Activated CD4-positive, alpha-beta memory T cell treated with anti-CD3 and anti-CD28 coated beads, Interleukin-2, amount 10 ng/mL, durations not matched to agents 7 days and 5 days (primary cell): ENCODE measurements at regions of chr3 and their contacts with region 1.

Region 1: DNA sequence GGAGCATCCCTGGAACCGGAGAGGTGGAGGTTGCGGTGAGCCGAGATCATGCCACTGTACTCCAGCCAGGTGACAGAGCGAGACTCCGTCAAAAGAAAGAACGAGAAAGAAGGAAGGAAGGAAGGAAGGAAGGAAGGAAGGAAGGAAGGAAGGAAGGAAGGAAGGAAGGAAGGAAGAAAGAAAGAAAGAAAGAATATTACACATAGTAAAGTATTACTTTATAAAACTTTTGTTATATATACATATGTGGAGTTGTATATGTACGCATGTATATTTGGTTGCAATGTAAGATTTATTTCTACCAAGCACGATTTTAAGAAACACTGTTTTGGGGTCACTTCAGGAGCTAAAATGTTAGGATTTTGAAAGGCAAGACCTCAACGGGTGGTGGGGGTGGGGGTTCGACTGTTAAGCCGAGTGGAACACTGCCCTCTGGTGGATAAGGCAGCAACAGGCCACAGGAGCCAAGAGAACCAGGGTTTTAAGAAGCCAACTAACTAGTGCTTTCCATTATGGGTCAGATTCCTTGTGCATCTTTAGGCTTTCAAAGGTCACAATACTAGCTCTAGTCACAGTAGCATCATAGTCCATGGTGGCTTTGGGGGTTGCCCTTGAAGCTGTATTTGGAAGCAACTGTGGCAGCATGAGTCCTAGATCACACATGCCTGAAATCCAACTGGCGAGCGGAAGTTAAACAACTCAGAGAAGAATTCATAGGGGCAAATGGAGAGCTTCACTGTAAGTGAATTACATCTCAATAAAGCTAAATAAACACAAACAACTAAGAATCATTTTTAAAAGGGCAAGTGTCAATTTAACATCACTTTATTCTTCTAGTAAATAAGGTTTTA is 22.5 kb downstream of the GLB1 start:
- DNase-seq: peak; percentile 75
- H3K4me3 Mint-ChIP-seq: no peak overlapping the region
- H3K27ac Mint-ChIP-seq: no peak overlapping the region
- H3K4me1 Mint-ChIP-seq: peaks cover 51% of the 10 kb centered on the region
- H3K27me3 Mint-ChIP-seq: peaks cover 2% of the 10 kb centered on the region

Region 2: DNA sequence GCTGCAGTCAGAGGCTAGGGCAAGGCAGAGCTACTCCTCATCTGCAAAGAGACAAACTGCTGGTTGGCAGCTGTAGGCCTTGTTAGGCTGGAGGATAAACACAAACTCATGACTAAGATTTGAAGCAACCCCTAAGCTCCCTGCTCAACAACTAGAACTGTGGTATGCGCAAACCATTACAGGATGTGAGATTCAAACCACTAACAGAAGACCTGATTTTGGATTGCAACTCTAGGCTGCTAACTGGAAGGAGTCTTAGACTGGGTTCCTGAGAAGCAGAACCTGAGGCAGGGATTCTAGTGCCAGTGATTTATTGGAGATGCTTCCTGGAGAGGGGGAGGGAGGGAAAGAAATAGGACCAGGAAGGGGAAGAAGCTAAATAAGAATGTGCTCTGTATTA is 100.5 kb before region 1 on chr3:
- CTCF ChIA-PET with region 1: interaction called, 14 read pairs
- POLR2A ChIA-PET with region 1: interaction called, 4 read pairs
- DNase-seq: peak; percentile 64
- H3K4me3 Mint-ChIP-seq: peak overlapping the region; percentile 6
- H3K27ac Mint-ChIP-seq: peak overlapping the region; percentile 90
- H3K4me1 Mint-ChIP-seq: peaks cover 60% of the 10 kb centered on the region
- H3K27me3 Mint-ChIP-seq: no peaks in the 10 kb centered on the region

Region 3: GRCh38 chr3:33030802-33031201 is 43.6 kb before region 1 on chr3:
- CTCF ChIA-PET with region 1: interaction called, 105 read pairs
- POLR2A ChIA-PET with region 1: interaction called, 10 read pairs
- DNase-seq: peak; percentile 72
- H3K4me3 Mint-ChIP-seq: no peak overlapping the region
- H3K27ac Mint-ChIP-seq: peak overlapping the region; percentile 41
- H3K4me1 Mint-ChIP-seq: peaks cover 31% of the 10 kb centered on the region
- H3K27me3 Mint-ChIP-seq: no peaks in the 10 kb centered on the region

Region 4: GRCh38 chr3:33063651-33064051 is 10.8 kb before region 1 on chr3:
- CTCF ChIA-PET with region 1: interaction called, 41 read pairs
- POLR2A ChIA-PET with region 1: interaction called, 10 read pairs
- DNase-seq: peak; percentile 79
- H3K4me3 Mint-ChIP-seq: peak overlapping the region; percentile 8
- H3K27ac Mint-ChIP-seq: peak overlapping the region; percentile 93
- H3K4me1 Mint-ChIP-seq: peaks cover 83% of the 10 kb centered on the region
- H3K27me3 Mint-ChIP-seq: no peaks in the 10 kb centered on the region

Region 5: DNA sequence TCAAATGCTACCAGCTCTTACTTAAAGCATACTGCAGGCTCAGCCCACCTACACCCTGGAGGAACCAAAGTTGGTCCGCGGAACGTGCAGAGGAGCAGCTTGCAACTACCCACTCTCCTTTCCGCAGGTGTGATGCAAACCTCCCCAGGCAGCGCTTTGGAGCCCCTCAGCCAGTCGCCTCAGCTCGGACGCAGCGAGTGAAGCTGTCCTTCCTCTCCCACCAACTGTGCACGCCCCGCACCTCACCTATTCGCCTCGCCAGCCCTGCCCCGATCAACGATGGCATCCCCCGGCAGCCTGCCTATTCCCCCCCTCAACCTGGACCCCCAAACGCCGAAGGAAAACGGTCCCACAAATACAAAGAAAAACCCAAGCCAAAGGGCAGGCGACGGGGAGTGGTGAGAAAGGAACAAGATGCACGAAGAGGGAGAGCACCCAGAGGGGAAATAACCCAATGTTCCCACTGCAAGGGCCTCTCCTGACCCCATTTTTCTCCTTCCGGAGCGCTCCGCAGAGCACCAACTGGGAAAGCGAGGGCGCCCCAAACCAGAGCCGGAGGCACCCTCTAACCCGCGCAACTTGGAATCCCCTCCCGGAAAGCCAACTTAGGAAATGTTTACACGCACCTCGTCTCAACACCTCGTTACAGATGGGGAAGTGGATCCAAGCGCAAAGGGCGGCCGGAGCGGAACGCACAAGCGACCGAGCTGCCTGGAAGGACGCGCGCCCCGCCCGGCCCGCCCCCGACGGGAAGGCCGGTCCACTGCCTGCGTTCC is 21.8 kb after region 1 on chr3:
- CTCF ChIA-PET with region 1: interaction called, 8 read pairs
- POLR2A ChIA-PET with region 1: interaction called, 11 read pairs
- DNase-seq: peak; percentile 54
- H3K4me3 Mint-ChIP-seq: peak overlapping the region; percentile 97
- H3K27ac Mint-ChIP-seq: peak overlapping the region; percentile 78
- H3K4me1 Mint-ChIP-seq: peaks cover 36% of the 10 kb centered on the region
- H3K27me3 Mint-ChIP-seq: no peaks in the 10 kb centered on the region

Region 6: DNA sequence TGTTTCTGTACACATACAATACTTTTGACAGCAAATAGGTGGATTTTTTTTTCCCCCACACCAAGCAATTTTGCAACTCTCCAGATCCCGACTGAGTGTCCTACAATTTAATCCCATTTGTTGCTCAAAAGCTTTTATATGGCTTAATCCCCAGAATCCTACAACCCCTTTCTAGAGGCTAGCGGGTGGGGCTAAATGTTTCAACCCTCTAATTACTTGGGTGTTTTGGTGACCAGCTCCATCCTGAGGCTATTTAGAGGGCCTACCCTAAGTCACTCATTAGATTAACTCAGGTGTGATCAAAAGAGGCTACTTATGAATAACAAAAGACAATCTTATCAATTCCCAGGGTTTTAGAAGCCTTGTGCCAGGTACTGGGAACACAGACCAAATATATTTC is 181.8 kb after region 1 on chr3:
- CTCF ChIA-PET with region 1: no interaction called
- POLR2A ChIA-PET with region 1: no interaction called
- DNase-seq: no peak
- H3K4me3 Mint-ChIP-seq: no peak overlapping the region
- H3K27ac Mint-ChIP-seq: no peak overlapping the region
- H3K4me1 Mint-ChIP-seq: no peaks in the 10 kb centered on the region
- H3K27me3 Mint-ChIP-seq: peaks cover 8% of the 10 kb centered on the region

Region 7: DNA sequence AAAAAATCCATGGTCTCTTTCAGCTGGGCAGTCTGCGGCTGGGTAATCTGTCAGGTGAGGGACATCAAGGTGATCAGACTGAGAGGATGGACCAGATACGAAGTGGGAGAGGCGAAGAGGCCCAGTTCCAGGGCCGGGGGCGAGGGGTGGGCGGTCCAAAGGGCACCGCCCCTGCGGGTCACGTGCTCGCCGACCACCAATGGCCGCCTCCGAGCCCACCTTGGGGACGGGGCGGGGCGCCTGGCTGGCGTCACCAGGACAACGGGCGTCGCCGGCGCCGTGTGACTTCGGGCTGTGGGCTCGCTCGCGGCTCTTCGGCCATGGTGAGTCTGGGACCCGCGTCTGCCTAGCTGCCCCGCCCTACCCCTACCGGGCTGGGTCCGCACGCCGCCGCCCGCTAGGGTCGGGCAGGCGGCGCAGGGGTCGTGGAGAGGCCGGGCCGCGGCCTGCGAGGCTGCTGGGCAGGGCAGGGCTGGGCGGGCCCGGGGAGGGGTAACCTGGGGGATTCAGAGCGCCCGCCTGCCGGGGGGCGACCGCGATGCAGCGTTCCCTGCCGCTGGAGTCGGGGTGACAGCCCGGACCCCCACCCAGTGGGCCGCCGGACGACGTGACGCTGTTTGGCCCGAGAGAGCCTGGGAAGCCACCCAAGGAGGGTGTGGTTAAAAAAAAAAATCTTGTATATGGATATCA is 202.9 kb after region 1 on chr3 and contains the start of gene FBXL2:
- CTCF ChIA-PET with region 1: no interaction called
- POLR2A ChIA-PET with region 1: no interaction called
- DNase-seq: no peak
- H3K4me3 Mint-ChIP-seq: peak within 1 kb of the TSS; percentile 46
- H3K27ac Mint-ChIP-seq: no peak within 1 kb of the TSS
- H3K4me1 Mint-ChIP-seq: no peaks in the 10 kb centered on the region
- H3K27me3 Mint-ChIP-seq: peaks cover 23% of the 10 kb centered on the region
- total RNA-seq, gene FBXL2: not detected